ENCODE measurements at regions of chr15 and their contacts with region 1.

Region 1: DNA sequence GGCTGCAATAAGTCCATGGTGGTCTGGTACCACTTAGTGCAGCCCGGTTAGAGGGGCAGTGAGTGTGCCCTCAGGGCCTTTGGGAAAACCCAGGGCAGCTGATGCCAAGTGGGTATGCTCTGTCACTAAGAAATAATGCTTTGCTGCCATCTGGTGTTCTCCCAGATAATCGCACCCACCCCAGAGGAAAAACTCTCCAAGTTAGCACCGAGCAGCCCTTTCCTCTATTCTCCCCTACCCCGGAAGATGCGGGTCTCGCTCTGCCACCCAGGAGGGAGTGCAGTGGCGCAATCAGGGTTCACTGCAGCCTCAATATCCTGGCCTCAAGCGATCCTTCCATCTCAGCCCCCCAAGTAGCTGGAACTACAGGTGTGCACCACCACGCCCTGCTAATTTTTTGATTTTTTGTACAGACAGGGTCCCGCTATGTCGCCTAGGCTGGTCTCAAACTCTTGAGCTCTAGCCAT is 21.3 kb upstream of the DAPK2 start:
- DNase-seq: no peak
- ATAC-seq: peak; percentile 87
- H3K4me3 ChIP-seq: no peak overlapping the region
- H3K27ac ChIP-seq: no peak overlapping the region
- H3K4me1 ChIP-seq: peaks cover 0 to 18% of the 10 kb centered on the region in 2 experiments; a peak in 1 of 4 replicates
- H3K27me3 ChIP-seq: no peaks in the 10 kb centered on the region
- CTCF ChIP-seq: peak; percentile 67 to 81 (median 73)
- POLR2A ChIP-seq: no peak
- RAD21 ChIP-seq: peak; percentile 90

Region 2: DNA sequence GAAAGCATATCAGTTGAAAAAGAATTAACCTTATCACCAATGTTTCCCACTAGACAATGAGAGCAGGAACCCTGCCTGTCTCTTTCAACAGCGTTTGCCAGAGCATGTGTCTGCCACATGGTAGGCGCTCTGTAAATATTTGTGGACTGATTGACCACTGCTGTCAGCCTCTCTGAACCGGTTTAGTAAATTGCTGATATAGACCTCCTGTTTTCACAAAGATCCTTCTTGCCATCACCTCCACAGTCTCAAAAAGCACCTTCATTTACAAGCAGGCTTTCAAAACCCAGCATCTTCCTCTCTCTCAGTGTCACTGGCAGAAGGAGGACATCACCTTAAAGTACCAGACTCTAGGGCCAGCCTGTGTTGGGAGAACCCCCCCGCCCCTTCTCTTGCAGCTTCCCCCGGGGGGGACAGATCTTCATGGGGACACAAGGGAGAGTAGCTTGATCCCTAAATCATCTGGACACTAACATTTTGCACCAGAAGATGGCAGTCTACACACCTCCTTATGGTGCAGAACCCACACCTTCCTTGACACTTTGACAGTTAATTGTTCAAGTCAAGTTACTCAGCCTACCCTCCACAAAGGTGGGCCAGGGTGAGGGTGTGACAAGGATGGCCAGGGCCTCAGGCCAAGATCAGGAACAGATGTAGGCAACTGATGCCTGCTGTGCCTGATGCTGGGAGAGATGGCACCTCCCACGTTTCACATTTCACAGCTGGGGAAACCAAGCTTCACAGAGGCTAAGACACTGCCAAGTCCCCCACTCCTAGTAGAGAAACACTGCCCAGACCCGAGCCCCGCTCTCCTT is 601.0 kb before region 1 on chr15:
- CTCF ChIA-PET with region 1: interaction called, 13 read pairs
- POLR2A ChIA-PET with region 1: no interaction called
- RAD21 ChIA-PET with region 1: no interaction called
- intact Hi-C with region 1: loop called (anchors 2 kb)
- DNase-seq: peak; percentile 74
- ATAC-seq: peak; percentile 94
- H3K4me3 ChIP-seq: no peak overlapping the region
- H3K27ac ChIP-seq: no peak overlapping the region
- H3K4me1 ChIP-seq: peaks cover 5 to 29% of the 10 kb centered on the region in 2 experiments
- H3K27me3 ChIP-seq: no peaks in the 10 kb centered on the region
- CTCF ChIP-seq: peak; percentile 52 to 75 (median 66); a peak in 5 of 6 replicates
- POLR2A ChIP-seq: no peak
- RAD21 ChIP-seq: peak; percentile 87

Region 3: DNA sequence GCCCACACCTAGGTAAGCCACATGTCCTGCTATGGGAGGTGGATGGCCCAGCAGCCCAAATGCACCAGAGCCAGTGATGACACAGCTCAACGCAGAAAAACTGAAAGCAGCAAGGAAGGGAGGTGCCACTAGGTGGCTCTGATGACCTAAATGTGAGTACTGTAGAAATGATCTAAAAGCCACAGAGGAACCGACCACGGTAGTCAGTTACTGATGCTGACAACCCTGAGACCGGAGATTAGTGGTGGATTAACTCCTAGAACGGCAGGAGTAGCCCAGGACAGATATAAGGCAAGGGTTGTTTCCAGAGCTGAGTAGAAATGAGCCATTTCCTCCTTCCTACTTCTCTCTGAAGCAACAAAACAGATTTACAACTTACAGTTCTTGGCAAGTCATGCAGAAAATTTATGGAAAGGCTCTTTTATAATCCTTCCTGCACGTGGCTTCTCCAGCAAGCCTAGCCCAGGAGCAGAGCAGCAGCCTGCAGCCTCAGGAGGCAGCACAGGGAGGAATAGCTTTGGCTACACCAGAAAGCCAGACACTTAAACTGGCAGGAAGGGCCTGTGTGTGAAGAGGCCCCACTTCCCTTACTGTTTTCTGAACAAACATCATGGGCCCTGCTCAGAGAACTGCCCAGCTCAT is 457.3 kb before region 1 on chr15:
- CTCF ChIA-PET with region 1: interaction called, 49 read pairs
- POLR2A ChIA-PET with region 1: interaction called, 3 read pairs
- RAD21 ChIA-PET with region 1: interaction called, 4 to 7 read pairs
- intact Hi-C with region 1: loop called (anchors 1 kb)
- DNase-seq: peak; percentile 69
- ATAC-seq: peak; percentile 98
- H3K4me3 ChIP-seq: no peak overlapping the region
- H3K27ac ChIP-seq: no peak overlapping the region
- H3K4me1 ChIP-seq: peaks cover 0 to 4% of the 10 kb centered on the region in 2 experiments; a peak in 1 of 4 replicates
- H3K27me3 ChIP-seq: no peaks in the 10 kb centered on the region
- CTCF ChIP-seq: peak; percentile 77 to 82 (median 80)
- POLR2A ChIP-seq: no peak
- RAD21 ChIP-seq: peak; percentile 90

Region 4: GRCh38 chr15:63833021-63833696 is 234.4 kb before region 1 on chr15:
- CTCF ChIA-PET with region 1: no interaction called
- POLR2A ChIA-PET with region 1: no interaction called
- RAD21 ChIA-PET with region 1: no interaction called
- intact Hi-C with region 1: loop called (anchors 5 kb)
- DNase-seq: no peak
- ATAC-seq: peak; percentile 57
- H3K4me3 ChIP-seq: peak overlapping the region; percentile 67 to 87
- H3K27ac ChIP-seq: peak overlapping the region; percentile 73; the same call in 1 of the 2 replicates
- H3K4me1 ChIP-seq: peaks cover 4 to 14% of the 10 kb centered on the region in 2 experiments; a peak in 3 of 4 replicates
- H3K27me3 ChIP-seq: no peaks in the 10 kb centered on the region
- CTCF ChIP-seq: no peak
- POLR2A ChIP-seq: no peak
- RAD21 ChIP-seq: no peak

Measured in HCT116 (cell line).